ENCODE measurements at regions of chr13 and their contacts with region 1.

Region 1: DNA sequence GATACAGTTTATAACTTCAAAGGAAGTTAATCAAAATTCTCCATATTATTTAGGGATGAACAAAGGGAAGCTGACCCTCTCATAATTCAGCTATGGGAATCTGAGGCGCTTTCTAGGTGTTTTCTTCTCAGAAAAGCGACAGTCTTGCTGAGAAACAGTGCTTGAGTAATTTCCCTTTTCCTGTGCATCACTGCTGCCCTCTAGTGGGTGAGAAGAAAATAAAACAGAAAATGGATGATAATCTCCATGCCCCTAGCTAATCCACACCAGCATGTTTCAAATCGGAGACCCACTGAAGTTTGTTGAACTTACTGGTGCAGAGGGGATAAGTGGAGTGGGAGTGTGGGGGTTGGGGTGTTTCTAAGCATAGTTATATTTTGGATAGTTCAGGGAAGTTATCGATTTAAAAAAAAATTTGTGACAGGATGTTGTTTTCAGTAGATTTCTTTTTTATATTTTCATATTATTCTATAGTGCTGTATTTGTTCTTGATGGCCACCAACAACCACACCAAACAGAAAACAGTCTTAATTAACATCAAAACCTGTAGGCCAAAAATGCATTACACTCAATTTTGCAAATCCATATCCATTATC is 21.4 kb downstream of the LCP1 start:
- DNase-seq: no peak
- H3K4me3 Mint-ChIP-seq: peak overlapping the region; percentile 53
- H3K27ac Mint-ChIP-seq: peak overlapping the region; percentile 79
- H3K4me1 Mint-ChIP-seq: peaks cover 60% of the 10 kb centered on the region
- H3K27me3 Mint-ChIP-seq: no peaks in the 10 kb centered on the region

Region 2: DNA sequence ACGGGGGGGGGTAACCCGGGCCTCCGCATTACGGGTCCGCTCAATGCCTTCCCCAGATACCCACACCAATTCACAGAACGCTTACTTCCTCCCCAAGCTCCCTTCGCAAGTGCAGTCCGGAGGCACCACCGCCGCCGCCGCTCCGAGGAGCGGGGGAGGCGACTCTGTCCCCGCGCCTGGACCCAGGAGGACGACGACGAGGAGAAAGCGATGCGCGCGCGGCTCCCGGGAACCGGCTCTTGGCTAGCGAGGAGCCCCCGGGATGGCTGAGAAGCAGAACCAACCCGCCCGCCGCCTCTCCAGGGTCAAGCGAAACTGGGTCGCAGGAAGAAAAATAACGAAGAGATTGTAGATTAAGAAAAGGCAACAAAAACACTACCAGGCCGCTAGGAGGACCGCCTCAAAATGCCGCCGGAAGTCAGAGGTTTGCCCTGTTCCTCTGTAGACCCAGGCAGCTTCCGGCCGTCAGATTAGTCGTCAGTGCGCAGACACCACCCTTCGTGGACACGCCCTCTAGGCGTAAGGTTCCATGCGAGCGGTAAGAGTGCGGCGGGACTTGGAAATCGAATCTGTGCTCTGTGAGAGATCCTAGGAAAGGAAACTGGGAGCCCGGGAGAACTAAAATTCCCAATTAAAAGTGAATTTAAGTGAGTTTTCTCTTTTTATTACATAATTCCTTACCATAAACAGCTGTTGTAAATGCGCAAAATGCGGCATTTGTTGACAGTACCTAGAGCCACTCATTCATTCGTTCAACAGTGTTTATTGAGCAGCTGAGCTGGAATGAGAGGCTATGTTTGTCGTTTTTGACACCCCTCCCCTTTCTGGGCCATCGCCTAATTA is 108.0 kb before region 1 on chr13 and contains the start of gene ZC3H13:
- CTCF ChIA-PET with region 1: no interaction called
- POLR2A ChIA-PET with region 1: no interaction called
- intact Hi-C with region 1: loop called (anchors 2 kb)
- DNase-seq: peak; percentile 96
- H3K4me3 Mint-ChIP-seq: peak within 1 kb of the TSS; percentile 90
- H3K27ac Mint-ChIP-seq: peak within 1 kb of the TSS; percentile 93
- H3K4me1 Mint-ChIP-seq: peaks cover 28% of the 10 kb centered on the region
- H3K27me3 Mint-ChIP-seq: peaks cover 8% of the 10 kb centered on the region
- total RNA-seq, gene ZC3H13: 37.0 to 47.3 TPM

Region 3: GRCh38 chr13:46097015-46097644 is 63.4 kb before region 1 on chr13:
- CTCF ChIA-PET with region 1: no interaction called
- POLR2A ChIA-PET with region 1: no interaction called
- intact Hi-C with region 1: no loop called
- DNase-seq: no peak
- H3K4me3 Mint-ChIP-seq: no peak overlapping the region
- H3K27ac Mint-ChIP-seq: no peak overlapping the region
- H3K4me1 Mint-ChIP-seq: no peaks in the 10 kb centered on the region
- H3K27me3 Mint-ChIP-seq: peaks cover 17% of the 10 kb centered on the region

Region 4: GRCh38 chr13:46143184-46143701 is 17.3 kb before region 1 on chr13:
- CTCF ChIA-PET with region 1: interaction called, 23 read pairs
- POLR2A ChIA-PET with region 1: interaction called, 3 read pairs
- intact Hi-C with region 1: no loop called
- DNase-seq: no peak
- H3K4me3 Mint-ChIP-seq: no peak overlapping the region
- H3K27ac Mint-ChIP-seq: no peak overlapping the region
- H3K4me1 Mint-ChIP-seq: peaks cover 31% of the 10 kb centered on the region
- H3K27me3 Mint-ChIP-seq: no peaks in the 10 kb centered on the region

Region 5: GRCh38 chr13:46176756-46177155 is 16.2 kb after region 1 on chr13:
- CTCF ChIA-PET with region 1: interaction called, 164 read pairs
- POLR2A ChIA-PET with region 1: interaction called, 239 read pairs
- intact Hi-C with region 1: no loop called
- DNase-seq: no peak
- H3K4me3 Mint-ChIP-seq: peak overlapping the region; percentile 97
- H3K27ac Mint-ChIP-seq: peak overlapping the region; percentile 96
- H3K4me1 Mint-ChIP-seq: peaks cover 66% of the 10 kb centered on the region
- H3K27me3 Mint-ChIP-seq: no peaks in the 10 kb centered on the region

Region 6: DNA sequence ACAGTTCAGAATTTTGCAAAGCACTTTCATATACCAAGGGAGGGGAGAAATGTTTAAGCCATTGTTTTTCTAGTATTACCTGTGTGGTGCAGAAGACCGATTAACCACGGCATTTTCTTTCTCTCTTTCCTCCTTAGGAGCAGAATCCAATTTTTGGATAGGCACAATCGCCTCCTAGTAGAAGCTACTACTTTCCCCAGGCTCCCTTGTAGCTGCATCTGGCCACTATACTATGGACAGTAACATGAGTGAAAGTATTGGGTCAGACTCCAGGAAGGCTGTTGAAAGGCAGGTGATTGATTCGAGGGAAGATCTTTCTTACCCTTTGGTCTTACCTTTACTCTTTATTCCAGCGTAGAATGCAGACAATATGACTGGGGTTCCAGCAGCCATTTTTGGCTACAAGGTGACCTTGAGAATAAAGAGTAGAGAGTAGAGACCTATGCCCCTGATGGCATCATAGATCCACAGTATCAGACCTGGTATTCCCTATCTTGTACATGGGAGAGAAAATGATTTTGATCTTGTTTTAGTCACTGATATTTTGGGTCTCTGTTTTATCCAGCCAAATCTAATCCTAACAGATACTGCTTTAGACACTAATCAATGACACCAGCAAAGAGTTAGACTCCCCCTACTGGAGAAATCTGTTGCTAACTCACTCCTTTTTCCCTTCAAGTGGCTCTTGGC is 128.1 kb after region 1 on chr13:
- CTCF ChIA-PET with region 1: interaction called, 20 read pairs
- POLR2A ChIA-PET with region 1: no interaction called
- intact Hi-C with region 1: loop called (anchors 1 kb)
- DNase-seq: no peak
- H3K4me3 Mint-ChIP-seq: no peak overlapping the region
- H3K27ac Mint-ChIP-seq: no peak overlapping the region
- H3K4me1 Mint-ChIP-seq: peaks cover 22% of the 10 kb centered on the region
- H3K27me3 Mint-ChIP-seq: no peaks in the 10 kb centered on the region